WTC11 (cell line): ENCODE measurements at regions of chr10 and their contacts with region 1.

Region 1: DNA sequence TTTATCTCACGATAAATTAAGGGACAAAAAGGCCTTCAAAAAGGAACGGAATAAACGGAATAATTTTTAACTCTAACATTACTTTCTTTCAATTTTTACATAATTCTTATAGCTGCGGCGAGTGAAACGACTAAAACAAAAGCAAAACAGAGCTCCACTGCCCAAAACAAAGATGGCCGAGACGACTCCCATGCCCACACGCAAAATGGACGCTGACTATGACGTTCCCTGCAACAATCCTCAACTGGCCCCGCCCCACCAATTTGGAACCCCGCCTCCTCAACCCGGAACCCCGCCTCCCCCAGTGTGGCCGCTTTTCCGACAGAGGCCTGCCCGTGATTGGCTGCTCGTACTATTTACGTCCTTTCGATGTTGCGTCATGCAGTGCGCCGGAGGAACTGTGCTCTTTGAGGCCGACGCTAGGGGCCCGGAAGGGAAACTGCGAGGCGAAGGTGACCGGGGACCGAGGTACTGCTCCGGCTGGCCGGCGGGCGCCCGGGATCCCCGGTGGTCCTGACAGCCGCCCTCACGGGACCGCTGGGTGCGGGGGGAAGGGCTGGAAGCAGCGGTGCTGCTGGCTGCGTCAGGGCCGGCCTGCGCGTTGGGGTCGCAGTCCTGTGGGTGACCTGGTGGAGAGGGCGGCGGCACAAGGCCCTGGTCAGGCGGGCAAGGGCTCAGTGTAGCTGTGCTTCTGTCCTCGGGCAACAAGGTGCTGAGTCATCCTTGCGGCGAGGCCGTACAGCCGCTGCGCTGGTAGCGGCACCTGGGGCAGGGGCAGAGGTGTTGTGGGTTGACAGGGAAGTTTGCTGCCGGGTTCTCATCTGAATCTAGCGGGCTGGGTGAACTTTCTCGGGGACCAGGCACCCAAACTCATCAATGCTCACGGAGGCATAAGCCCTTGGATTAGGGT is at the start of gene GHITM:
- DNase-seq: peak; percentile 99
- ATAC-seq: peak; percentile 98
- H3K4me3 Mint-ChIP-seq: peak within 1 kb of the TSS; percentile 95
- H3K27ac Mint-ChIP-seq: peak within 1 kb of the TSS; percentile 97
- H3K4me1 Mint-ChIP-seq: peaks cover 23% of the 10 kb centered on the region
- H3K27me3 Mint-ChIP-seq: peaks cover 2% of the 10 kb centered on the region
- CTCF ChIP-seq: no peak
- total RNA-seq, gene GHITM: 95.9 to 98.8 TPM (median 97.6 TPM) in 3 replicates

Region 2: DNA sequence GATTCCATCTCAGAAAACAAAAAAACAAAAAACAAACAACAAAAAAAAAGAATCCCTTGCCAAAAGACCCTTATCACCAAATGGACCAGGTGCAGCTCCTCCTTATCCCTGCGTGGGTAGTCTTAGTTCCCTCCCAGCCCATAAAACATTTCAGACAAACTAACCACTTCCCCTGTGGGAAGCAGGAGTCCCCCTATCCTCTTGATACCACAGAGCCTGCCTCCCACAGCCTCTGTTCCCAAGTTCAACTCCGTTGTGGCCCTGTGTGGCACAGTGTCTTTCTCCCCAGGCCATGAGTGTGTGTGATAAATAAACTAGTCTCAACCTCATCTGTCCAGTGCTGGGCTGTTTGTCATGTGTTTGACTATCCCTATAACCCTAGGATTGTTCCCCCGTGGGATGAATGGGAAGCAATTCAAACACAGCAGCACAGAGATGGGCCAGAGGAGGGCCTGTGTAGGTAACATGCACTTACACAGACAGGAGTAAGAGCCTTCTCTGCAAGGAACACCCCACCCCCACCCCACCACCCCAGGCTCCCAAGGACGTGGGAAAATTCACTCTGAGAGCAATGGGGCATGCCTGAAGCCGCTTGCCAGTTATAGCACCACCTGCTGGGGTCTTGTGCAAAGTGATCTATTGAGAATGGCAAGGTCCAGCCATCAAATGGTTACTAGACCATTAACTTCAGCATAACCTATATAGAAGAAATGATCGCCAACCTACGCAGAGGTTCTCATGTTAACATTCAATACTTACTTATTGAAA is 147.2 kb before region 1 on chr10:
- CTCF ChIA-PET with region 1: no interaction called
- POLR2A ChIA-PET with region 1: no interaction called
- DNase-seq: peak; percentile 66
- ATAC-seq: peak; percentile 96
- H3K4me3 Mint-ChIP-seq: no peak overlapping the region
- H3K27ac Mint-ChIP-seq: 0 out of 2 replicates have a peak overlapping the region, but pooled peaks have one; percentile 51
- H3K4me1 Mint-ChIP-seq: peaks cover 3% of the 10 kb centered on the region
- H3K27me3 Mint-ChIP-seq: no peaks in the 10 kb centered on the region; the same call in 1 of the 2 replicates
- CTCF ChIP-seq: peak; percentile 33; the same call in 1 of the 2 replicates

Region 3: GRCh38 chr10:84038035-84038434 is 101.3 kb before region 1 on chr10:
- CTCF ChIA-PET with region 1: no interaction called
- POLR2A ChIA-PET with region 1: no interaction called
- DNase-seq: no peak
- ATAC-seq: no peak
- H3K4me3 Mint-ChIP-seq: no peak overlapping the region
- H3K27ac Mint-ChIP-seq: no peak overlapping the region
- H3K4me1 Mint-ChIP-seq: no peaks in the 10 kb centered on the region
- H3K27me3 Mint-ChIP-seq: no peaks in the 10 kb centered on the region; the same call in 1 of the 2 replicates
- CTCF ChIP-seq: no peak

Region 4: DNA sequence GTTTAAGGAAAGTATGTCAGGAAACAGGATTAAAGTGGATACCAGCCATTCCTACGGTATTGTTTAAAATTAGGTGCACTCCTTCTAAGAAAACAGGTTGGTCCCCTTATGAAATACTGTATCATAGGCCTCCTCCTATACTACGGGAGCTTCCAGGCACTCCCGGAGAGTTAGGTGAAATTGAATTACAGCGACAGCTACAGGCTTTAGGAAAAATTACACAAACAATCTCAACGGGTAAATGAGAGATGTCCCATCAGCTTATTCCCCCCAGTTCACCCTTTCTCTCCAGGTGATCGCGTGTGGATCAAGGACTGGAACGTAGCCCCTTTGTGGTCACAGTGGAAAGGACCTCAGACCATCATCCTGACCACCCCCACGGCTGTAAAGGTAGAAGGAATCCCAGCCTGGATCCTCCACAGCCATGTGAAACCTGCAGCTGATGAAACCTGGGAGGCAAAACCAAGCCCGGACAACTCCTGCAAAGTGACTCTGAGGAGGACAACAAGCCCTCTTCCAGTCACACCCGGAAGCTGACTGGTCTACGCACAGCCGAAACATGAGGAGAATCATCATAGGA is 25.2 kb before region 1 on chr10:
- CTCF ChIA-PET with region 1: interaction called, 11 read pairs
- POLR2A ChIA-PET with region 1: no interaction called
- DNase-seq: peak; percentile 11
- ATAC-seq: no peak
- H3K4me3 Mint-ChIP-seq: no peak overlapping the region
- H3K27ac Mint-ChIP-seq: 0 out of 2 replicates have a peak overlapping the region, but pooled peaks have one; percentile 15
- H3K4me1 Mint-ChIP-seq: no peaks in the 10 kb centered on the region
- H3K27me3 Mint-ChIP-seq: no peaks in the 10 kb centered on the region; the same call in 1 of the 2 replicates
- CTCF ChIP-seq: 0 out of 2 replicates have a peak, but pooled peaks have one; percentile 17